ENCODE measurements at regions of chrX and their contacts with region 1.

Region 1: GRCh38 chrX:136694431-136695087 is 46.6 kb downstream of the CD40LG start:
- DNase-seq: no peak
- ATAC-seq: peak; percentile 47 to 68
- H3K4me3 ChIP-seq: no peak overlapping the region
- H3K27ac ChIP-seq: no peak overlapping the region
- H3K4me1 ChIP-seq: no peaks in the 10 kb centered on the region
- H3K27me3 ChIP-seq: no peaks in the 10 kb centered on the region
- CTCF ChIP-seq: peak; percentile 35 to 59 (median 39)
- POLR2A ChIP-seq: no peak

Region 2: DNA sequence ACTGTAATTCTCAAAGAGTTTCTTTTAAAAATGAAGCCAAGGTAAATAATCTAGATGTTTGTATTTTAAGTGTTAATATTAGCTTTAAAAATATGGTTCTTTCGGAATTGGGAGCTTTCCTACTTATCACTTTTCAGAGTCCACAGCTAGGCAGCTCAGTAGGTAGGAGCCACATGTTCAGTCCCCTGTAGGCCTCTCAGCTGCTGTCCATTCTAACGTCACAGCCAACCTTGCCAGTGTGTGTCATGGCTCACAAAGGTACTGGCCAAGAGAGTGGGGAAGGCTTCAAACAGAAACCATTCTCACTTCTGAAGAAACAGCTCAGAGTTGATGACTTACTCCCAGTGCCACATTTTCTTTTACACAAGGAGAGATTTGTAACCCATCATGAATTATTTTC is 256.8 kb before region 1 on chrX:
- in situ Hi-C with region 1: no loop called
- intact Hi-C with region 1: no loop called
- DNase-seq: no peak
- ATAC-seq: no peak
- H3K4me3 ChIP-seq: no peak overlapping the region
- H3K27ac ChIP-seq: no peak overlapping the region
- H3K4me1 ChIP-seq: no peaks in the 10 kb centered on the region
- H3K27me3 ChIP-seq: no peaks in the 10 kb centered on the region
- CTCF ChIP-seq: no peak
- POLR2A ChIP-seq: no peak

Region 3: GRCh38 chrX:136608295-136609171 is 86.0 kb before region 1 on chrX:
- in situ Hi-C with region 1: no loop called
- intact Hi-C with region 1: loop called (anchors 5 kb)
- DNase-seq: peak; percentile 2 to 15
- ATAC-seq: no peak
- H3K4me3 ChIP-seq: no peak overlapping the region
- H3K27ac ChIP-seq: no peak overlapping the region
- H3K4me1 ChIP-seq: no peaks in the 10 kb centered on the region
- H3K27me3 ChIP-seq: no peaks in the 10 kb centered on the region
- CTCF ChIP-seq: peak in 1 of 5 experiments; percentile 29
- POLR2A ChIP-seq: no peak

Region 4: GRCh38 chrX:136735601-136736000 is 41.0 kb after region 1 on chrX:
- in situ Hi-C with region 1: no loop called
- intact Hi-C with region 1: no loop called
- DNase-seq: no peak
- ATAC-seq: no peak
- H3K4me3 ChIP-seq: no peak overlapping the region
- H3K27ac ChIP-seq: peak overlapping the region; percentile 19 to 58 (median 50)
- H3K4me1 ChIP-seq: peaks cover 12 to 31% of the 10 kb centered on the region in 2 donors
- H3K27me3 ChIP-seq: no peaks in the 10 kb centered on the region
- CTCF ChIP-seq: no peak
- POLR2A ChIP-seq: no peak

Region 5: GRCh38 chrX:136778916-136779315 is 84.4 kb after region 1 on chrX:
- in situ Hi-C with region 1: no loop called
- intact Hi-C with region 1: no loop called
- DNase-seq: no peak
- ATAC-seq: no peak
- H3K4me3 ChIP-seq: peak overlapping the region in 3 of 4 donors; percentile 36 to 67 (median 44)
- H3K27ac ChIP-seq: peak overlapping the region; percentile 66 to 84 (median 78)
- H3K4me1 ChIP-seq: peaks cover 0 to 15% of the 10 kb centered on the region in 2 donors
- H3K27me3 ChIP-seq: no peaks in the 10 kb centered on the region
- CTCF ChIP-seq: no peak
- POLR2A ChIP-seq: no peak

Measured in gastrocnemius medialis (tissue), 4 donors.